ENCODE measurements at regions of chr13 and their contacts with region 1.

Region 1: DNA sequence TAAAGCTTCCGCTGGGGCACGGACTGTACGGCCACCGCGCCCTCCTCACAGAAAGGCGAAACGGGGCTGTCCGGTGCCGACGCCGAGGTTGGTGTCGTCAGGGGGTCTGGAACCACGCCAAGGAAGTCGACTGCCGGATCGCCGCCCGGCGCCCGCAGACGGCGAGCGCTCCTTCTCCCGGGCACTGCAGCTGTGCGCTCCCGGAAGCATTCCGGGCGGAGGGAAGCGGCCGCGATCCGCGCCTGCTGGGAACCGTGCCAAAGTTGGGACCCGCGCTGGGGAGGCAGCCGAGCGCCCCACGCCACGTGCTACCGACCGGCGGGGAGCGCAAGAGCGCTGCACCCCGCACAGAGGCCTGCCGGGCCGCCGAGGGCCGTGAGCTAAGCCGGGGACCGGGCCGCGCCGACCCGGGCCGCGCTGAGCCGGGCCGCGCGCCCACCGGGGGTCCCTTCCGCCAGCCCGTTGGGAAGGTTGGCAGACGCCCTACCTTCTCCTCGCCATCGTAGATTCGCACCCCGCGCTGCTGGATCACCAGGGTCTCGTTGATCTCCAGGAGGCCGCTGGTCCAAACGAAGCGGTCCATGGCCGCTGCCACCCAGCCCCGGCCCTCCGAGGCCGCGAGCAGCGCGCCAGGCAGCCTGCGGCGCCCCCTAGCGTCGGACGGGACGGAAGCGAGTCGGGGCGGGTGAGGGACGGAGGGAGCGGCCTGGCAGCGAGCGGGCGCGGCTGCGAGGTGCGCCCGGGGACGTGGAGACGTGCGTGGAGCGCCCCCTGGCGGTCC is at the start of gene VPS36:
- DNase-seq: peak; percentile 93
- H3K4me3 Mint-ChIP-seq: peak within 1 kb of the TSS; percentile 87
- H3K27ac Mint-ChIP-seq: peak within 1 kb of the TSS; percentile 92
- H3K4me1 Mint-ChIP-seq: peaks cover 40% of the 10 kb centered on the region
- H3K27me3 Mint-ChIP-seq: peaks cover under 1% of the 10 kb centered on the region
- total RNA-seq, gene VPS36: 42.7 to 47.4 TPM

Region 2: GRCh38 chr13:52345048-52345447 is 105.2 kb before region 1 on chr13:
- CTCF ChIA-PET with region 1: interaction called, 17 read pairs
- POLR2A ChIA-PET with region 1: no interaction called
- DNase-seq: no peak
- H3K4me3 Mint-ChIP-seq: no peak overlapping the region
- H3K27ac Mint-ChIP-seq: no peak overlapping the region
- H3K4me1 Mint-ChIP-seq: no peaks in the 10 kb centered on the region
- H3K27me3 Mint-ChIP-seq: peaks cover 9% of the 10 kb centered on the region

Region 3: DNA sequence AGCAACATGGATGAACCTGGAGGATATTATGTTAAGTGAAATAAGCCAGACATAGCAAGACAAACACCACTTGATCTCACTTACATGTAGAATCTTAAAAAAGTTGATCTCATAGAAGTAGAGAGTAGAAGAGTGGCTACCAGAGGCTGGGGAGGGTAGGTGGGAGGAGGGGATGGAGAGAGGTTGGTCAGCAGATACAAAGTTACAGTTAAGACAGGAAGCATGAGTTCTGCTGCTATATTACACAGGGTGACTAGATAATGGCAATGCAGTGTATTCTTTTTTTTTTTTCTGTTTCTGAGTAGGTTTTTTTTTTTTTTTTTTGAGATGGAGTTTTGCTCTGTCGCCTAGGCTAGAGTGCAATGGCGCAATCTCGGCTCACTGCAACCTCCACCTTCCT is 29.0 kb before region 1 on chr13:
- CTCF ChIA-PET with region 1: interaction called, 13 read pairs
- POLR2A ChIA-PET with region 1: no interaction called
- DNase-seq: no peak
- H3K4me3 Mint-ChIP-seq: no peak overlapping the region
- H3K27ac Mint-ChIP-seq: no peak overlapping the region
- H3K4me1 Mint-ChIP-seq: peaks cover 4% of the 10 kb centered on the region
- H3K27me3 Mint-ChIP-seq: no peaks in the 10 kb centered on the region

Region 4: GRCh38 chr13:52432456-52432855 is 17.7 kb before region 1 on chr13:
- CTCF ChIA-PET with region 1: interaction called, 10 read pairs
- POLR2A ChIA-PET with region 1: no interaction called
- DNase-seq: no peak
- H3K4me3 Mint-ChIP-seq: no peak overlapping the region
- H3K27ac Mint-ChIP-seq: no peak overlapping the region
- H3K4me1 Mint-ChIP-seq: peaks cover 5% of the 10 kb centered on the region
- H3K27me3 Mint-ChIP-seq: no peaks in the 10 kb centered on the region

Measured in activated CD4-positive, alpha-beta T cell treated with anti-CD3 and anti-CD28 coated beads, Interleukin-2, amount 10 ng/mL, durations not matched to agents 7 days and 5 days (primary cell).